Activated CD4-positive, alpha-beta T cell treated with anti-CD3 and anti-CD28 coated beads, Interleukin-2, amount 10 ng/mL, durations not matched to agents 24 days and 14 days (primary cell): ENCODE measurements at regions of chr7 and their contacts with region 1.

Region 1: DNA sequence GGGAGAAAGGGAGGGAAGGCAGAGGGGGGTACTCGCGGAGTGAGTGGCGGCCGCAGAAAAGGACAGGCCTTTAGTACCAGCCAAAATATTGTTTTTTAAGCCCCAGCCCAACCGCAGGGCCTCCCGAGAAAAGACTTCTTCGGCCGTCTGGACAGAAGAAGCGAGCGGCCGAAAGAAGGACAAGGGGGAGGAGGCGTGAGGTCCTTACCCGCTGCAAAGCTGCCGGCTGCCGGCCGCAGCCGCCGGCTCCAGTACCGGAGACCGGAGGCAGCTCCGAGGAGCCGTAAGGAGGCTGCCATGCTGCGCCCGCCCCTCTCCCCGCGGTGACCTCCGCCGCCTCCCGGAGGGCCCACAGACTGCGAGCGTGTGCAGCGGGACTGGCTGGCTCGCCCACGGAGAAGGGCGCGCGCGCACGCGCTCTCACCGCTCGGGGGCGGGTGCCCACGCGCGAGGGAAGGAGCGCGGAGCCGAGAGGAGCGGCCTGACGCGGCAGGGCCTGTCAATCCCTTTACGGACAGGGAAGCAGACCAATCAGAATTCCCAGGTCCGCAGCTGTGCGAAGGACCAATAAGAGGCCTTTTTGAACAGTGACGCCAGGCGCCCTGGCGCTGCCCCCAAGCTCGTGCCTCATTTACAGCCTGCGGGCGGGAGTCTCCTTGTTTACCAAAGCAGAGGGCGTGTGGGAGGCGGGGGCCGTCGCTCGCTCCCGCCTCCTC is at the start of gene HIBADH:
- DNase-seq: peak; percentile 99
- H3K4me3 Mint-ChIP-seq: peak within 1 kb of the TSS; percentile 86
- H3K27ac Mint-ChIP-seq: peak within 1 kb of the TSS; percentile 91
- H3K4me1 Mint-ChIP-seq: peaks cover 21% of the 10 kb centered on the region
- H3K27me3 Mint-ChIP-seq: peaks cover 3% of the 10 kb centered on the region
- total RNA-seq, gene HIBADH: 21.5 and 22.6 TPM in 2 replicates

Region 2: DNA sequence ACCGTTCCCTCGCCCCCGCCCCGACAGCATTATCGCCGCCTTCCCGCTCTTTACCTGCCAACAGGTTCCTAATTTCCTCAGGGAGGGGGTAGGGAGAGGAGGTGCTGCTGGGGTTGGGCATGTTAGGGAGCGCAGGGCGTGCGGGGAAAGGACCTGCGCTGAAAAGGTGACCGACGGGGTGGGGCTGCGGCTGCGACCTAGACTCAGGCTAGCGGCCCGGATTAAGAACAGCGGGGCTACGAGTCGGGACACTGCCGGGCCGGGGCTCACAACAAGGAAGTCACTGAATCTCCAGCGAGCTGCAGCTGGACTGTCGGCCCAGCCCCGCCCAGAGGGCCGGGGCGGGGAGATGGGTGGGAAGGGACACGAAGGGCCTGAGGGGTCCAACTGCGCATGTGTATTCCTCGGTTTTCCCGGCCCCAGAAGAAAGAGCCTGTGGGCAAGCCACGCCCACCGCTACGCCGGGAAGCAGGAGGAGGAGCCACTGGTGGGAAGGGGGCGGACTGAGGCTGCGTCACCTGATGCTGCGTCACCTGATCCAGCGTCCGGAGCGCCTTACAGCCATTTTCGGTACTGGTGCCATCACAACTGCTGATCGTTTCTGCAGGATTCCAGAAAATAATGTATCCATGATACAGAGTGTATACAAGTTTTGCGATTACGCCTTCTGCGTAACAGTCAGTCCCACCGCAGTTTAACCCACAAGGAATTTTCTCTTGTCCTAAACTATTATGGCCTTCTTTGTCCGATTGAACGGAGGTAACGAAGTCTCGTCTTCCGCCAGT is 798.1 kb before region 1 on chr7 and contains the start of gene SKAP2:
- intact Hi-C with region 1: loop called (anchors 10 kb)
- DNase-seq: peak; percentile 96
- H3K4me3 Mint-ChIP-seq: peak within 1 kb of the TSS; percentile 93
- H3K27ac Mint-ChIP-seq: peak within 1 kb of the TSS; percentile 73
- H3K4me1 Mint-ChIP-seq: peaks cover 16% of the 10 kb centered on the region
- H3K27me3 Mint-ChIP-seq: peaks cover 39% of the 10 kb centered on the region
- total RNA-seq, gene SKAP2: 3.6 and 4.6 TPM in 2 replicates

Region 3: DNA sequence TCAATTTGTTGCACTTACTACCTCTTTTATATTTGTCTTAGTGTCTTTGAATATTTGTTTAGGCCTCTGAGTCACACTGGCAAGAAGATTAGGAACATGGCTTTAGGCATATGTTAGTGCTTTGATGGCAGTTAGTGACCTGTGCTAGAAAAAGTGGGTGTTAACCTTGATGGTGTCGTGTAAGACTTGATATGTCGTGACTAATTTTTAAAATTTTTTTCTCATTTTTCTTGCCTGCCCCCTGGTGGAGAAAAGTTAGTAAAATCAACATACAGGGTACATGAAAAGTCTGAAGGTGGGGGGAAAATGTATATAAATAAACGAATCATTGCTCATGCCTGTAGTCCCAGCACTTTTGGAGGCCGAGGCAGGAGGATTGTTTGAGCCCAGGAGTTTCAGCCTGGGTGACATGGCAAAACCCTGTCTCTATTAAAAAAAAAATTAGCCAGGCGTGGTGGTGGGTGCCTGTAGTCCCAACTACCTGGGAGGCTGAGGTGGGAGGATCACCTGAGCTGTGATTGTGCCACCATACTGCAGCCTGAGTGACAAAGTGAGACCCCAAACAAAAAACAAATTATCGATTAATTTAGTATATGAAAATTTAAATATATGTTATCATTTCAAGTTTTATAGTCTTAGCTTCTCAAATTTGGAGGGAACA is 121.9 kb after region 1 on chr7:
- intact Hi-C with region 1: loop called (anchors 1 kb)
- DNase-seq: peak; percentile 71
- H3K4me3 Mint-ChIP-seq: no peak overlapping the region
- H3K27ac Mint-ChIP-seq: no peak overlapping the region
- H3K4me1 Mint-ChIP-seq: peaks cover 7% of the 10 kb centered on the region
- H3K27me3 Mint-ChIP-seq: no peaks in the 10 kb centered on the region

Region 4: DNA sequence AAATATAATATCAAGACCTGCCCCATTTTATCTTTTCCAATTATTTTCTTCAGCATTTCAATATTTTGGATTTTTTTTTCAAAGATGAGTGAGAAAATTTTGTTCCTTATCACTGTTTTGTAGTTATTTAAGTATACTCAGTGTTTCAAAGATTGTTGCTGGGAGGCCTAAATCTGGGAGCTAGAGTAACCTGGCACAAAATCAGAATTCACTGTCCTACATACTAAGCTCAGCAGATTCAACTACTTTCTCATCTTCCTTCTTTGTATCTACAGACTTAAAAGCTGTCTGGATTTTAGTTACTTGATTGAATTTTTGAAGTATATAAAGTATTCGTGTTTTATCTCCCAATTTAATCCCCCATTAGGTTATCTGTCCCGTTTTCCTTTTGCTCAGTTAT is 163.2 kb after region 1 on chr7:
- intact Hi-C with region 1: no loop called
- DNase-seq: no peak
- H3K4me3 Mint-ChIP-seq: no peak overlapping the region
- H3K27ac Mint-ChIP-seq: no peak overlapping the region
- H3K4me1 Mint-ChIP-seq: no peaks in the 10 kb centered on the region
- H3K27me3 Mint-ChIP-seq: no peaks in the 10 kb centered on the region

Region 5: DNA sequence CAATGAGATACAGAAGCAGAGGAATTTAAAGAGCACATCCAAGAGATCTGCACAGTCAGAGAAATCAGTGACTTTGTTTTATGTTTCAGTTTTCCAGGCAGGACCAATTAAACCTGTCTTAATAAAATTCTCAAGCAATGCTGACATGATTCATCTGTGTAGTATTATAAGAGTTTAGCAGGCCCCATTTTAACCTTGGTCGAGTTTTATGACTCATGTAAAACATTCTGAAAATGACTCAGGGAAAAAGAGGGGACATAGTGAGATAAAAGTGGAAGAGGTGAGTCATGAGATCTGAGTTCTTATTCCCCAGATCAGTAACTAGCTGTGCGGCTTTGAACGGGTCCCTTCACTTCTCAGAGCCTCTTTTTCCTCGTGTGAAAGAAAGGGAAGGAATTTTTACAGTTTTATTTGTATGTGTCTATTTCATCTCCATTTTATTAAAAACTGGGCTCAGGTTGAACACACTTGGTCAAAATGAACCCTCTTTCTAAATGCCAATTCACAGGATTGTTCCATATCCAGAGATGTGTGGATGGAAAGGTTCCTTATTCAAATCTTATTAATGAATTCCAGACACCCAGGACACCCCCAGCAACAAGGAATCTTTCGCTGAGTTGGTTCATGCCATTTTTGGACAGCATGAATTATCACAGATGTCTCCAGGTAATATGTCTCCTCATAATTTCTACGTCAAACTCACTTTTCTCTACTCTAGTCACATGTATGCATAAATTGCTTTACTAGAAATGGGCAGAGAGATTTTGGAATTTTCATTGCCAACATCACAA is 374.8 kb after region 1 on chr7:
- intact Hi-C with region 1: loop called (anchors 10 kb)
- DNase-seq: no peak
- H3K4me3 Mint-ChIP-seq: no peak overlapping the region
- H3K27ac Mint-ChIP-seq: peak overlapping the region; percentile 54
- H3K4me1 Mint-ChIP-seq: peaks cover 25% of the 10 kb centered on the region
- H3K27me3 Mint-ChIP-seq: peaks cover 30% of the 10 kb centered on the region

Region 6: GRCh38 chr7:28408960-28409715 is 746.5 kb after region 1 on chr7:
- intact Hi-C with region 1: loop called (anchors 10 kb)
- DNase-seq: peak; percentile 82
- H3K4me3 Mint-ChIP-seq: peak overlapping the region; percentile 85
- H3K27ac Mint-ChIP-seq: peak overlapping the region; percentile 81
- H3K4me1 Mint-ChIP-seq: peaks cover 25% of the 10 kb centered on the region
- H3K27me3 Mint-ChIP-seq: peaks cover 63% of the 10 kb centered on the region